ENCODE measurements at regions of chr18 and their contacts with region 1.

Region 1: GRCh38 chr18:63025251-63026090 is 294.1 kb downstream of the BCL2 start:
- DNase-seq: peak; percentile 35

Region 2: GRCh38 chr18:63439334-63439733 is 413.9 kb after region 1 on chr18:
- in situ Hi-C with region 1: loop called (anchors 25 kb)
- DNase-seq: peak; percentile 57

Measured in ACHN (cell line).